ENCODE measurements at regions of chr12 and their contacts with region 1.

Region 1: GRCh38 chr12:130041983-130042812 is 120.1 kb upstream of the FZD10 start:
- DNase-seq: peak; percentile 54
- ATAC-seq: no peak

Region 2: GRCh38 chr12:130086248-130086647 is 44.0 kb after region 1 on chr12:
- intact Hi-C with region 1: no loop called
- DNase-seq: no peak
- ATAC-seq: peak; percentile 13

Region 3: DNA sequence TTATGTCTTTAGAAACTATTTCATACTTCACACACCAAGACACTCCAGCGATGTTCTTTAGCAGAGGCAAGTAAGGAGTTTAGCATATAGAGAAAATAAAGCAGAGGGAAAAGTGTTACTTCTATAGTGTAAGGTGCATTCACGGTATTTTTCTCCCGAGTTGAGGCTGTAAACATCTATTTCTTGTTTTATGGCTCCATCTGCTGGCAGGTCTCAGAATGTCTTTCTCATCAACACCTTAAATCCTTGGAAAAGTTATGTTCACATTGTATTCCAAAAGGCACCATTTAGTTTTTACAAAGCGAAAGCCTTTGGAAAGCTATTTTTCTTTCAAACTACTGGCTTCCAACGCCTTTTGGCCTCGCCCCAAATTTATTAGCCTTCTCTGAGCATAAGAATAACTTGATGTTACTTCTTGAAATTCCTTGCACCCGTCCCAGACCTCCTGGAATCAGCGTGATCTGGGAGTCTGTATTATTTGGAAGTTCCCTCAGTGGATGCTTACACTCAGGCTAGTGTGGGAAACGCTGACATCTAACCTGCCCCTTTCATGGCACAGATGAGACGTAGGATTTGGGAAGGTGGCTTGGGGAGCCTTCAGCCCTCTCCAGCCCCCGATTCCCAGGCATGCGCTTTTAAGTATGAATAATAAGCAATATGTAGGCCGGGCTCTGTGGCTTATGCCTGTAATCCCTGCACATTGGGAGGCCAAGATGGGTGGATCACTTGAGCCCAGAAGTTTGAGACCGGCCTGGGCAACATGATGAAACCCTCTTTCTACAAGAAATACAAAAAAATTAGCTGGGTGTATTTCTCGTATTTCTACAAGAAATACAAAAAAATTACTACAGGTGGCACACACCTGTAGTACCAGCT is 293.6 kb after region 1 on chr12:
- intact Hi-C with region 1: loop called (anchors 10 kb)
- DNase-seq: no peak
- ATAC-seq: no peak

Measured in left ventricle myocardium superior (tissue), 1 donor.